Cardiac septum (tissue), 1 donor: ENCODE measurements at regions of chr14 and their contacts with region 1.

Region 1: DNA sequence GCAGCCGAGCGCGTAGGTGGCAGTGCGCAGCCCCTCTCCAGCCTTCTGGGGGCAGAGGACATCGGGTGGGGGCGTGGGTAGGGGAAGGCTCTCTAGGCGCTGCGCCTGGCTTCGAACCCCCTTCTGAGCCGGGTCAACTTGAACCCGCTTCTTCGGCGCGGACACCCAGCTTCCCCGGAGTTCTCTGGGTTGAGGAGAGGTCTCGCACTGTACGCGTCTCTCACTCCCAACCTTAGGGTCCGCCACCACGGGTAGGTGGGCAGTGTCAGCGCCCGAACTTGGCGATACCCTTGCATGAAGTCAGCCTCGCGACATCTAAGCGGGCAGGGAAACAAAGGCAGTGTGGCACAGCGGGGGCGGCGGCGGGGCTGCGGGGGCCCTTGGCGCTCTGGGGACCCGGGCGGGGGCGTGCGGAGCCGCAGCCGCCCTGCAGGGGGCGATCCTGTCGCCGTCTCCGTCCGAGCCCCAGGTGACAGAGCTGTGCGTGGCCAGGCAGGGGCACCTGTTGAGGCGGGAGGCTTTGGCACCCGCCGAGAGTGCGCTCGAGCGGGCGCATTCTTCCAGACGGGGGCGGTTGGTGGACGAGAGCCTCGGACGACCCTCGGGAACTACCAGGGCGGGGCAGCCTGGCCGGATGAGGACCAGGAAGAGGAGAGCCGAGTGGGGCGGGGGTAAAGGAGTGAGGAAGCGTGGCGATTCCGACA is 1.1 kb downstream of the GALNT16 start:
- DNase-seq: peak; percentile 82

Region 2: GRCh38 chr14:69317104-69317755 is 56.2 kb after region 1 on chr14:
- intact Hi-C with region 1: loop called (anchors 5 kb)
- DNase-seq: peak; percentile 89

Region 3: GRCh38 chr14:69346710-69347109 is 85.7 kb after region 1 on chr14:
- intact Hi-C with region 1: loop called (anchors 5 kb)
- DNase-seq: no peak

Region 4: GRCh38 chr14:69553221-69553620 is 292.2 kb after region 1 on chr14:
- intact Hi-C with region 1: no loop called
- DNase-seq: no peak